ENCODE measurements at regions of chr10 and their contacts with region 1.

Region 1: GRCh38 chr10:80686734-80687475 is 149.2 kb downstream of the SH2D4B start:
- DNase-seq: no peak
- H3K4me3 ChIP-seq: no peak overlapping the region
- H3K27ac ChIP-seq: no peak overlapping the region
- H3K4me1 ChIP-seq: no peaks in the 10 kb centered on the region
- H3K27me3 ChIP-seq: no peaks in the 10 kb centered on the region
- CTCF ChIP-seq: no peak

Region 2: GRCh38 chr10:80709866-80710265 is 23.0 kb after region 1 on chr10:
- CTCF ChIA-PET with region 1: interaction called, 17 read pairs
- dilution Hi-C with region 1: no loop called
- in situ Hi-C with region 1: no loop called
- intact Hi-C with region 1: no loop called
- DNase-seq: no peak
- H3K4me3 ChIP-seq: no peak overlapping the region
- H3K27ac ChIP-seq: no peak overlapping the region
- H3K4me1 ChIP-seq: no peaks in the 10 kb centered on the region
- H3K27me3 ChIP-seq: no peaks in the 10 kb centered on the region
- CTCF ChIP-seq: no peak

Region 3: GRCh38 chr10:80855348-80855971 is 168.6 kb after region 1 on chr10:
- CTCF ChIA-PET with region 1: no interaction called
- dilution Hi-C with region 1: no loop called
- in situ Hi-C with region 1: no loop called
- intact Hi-C with region 1: no loop called
- DNase-seq: no peak
- H3K4me3 ChIP-seq: no peak overlapping the region
- H3K27ac ChIP-seq: no peak overlapping the region
- H3K4me1 ChIP-seq: no peaks in the 10 kb centered on the region
- H3K27me3 ChIP-seq: peaks cover 3% of the 10 kb centered on the region
- CTCF ChIP-seq: peak in 1 of 2 donors; percentile 42

Measured in mammary epithelial cell (primary cell).